Naive thymus-derived CD4-positive, alpha-beta T cell (primary cell): ENCODE measurements at regions of chr19 and their contacts with region 1.

Region 1: GRCh38 chr19:34428549-34429285 is 536 bp downstream of the UBA2 start:
- DNase-seq: peak in 2 of 9 donors; percentile 20 to 34
- ATAC-seq: peak; percentile 55
- H3K4me3 ChIP-seq: peak overlapping the region; percentile 95
- H3K4me3 Mint-ChIP-seq: peak overlapping the region; percentile 94 to 99 (median 98)
- H3K27ac ChIP-seq: peak overlapping the region; percentile 96
- H3K27ac Mint-ChIP-seq: peak overlapping the region; percentile 84 to 97 (median 94)
- H3K4me1 ChIP-seq: peaks cover 12 to 13% of the 10 kb centered on the region in 2 donors
- H3K4me1 Mint-ChIP-seq: peaks cover 24 to 52% (median 43%) of the 10 kb centered on the region in 7 donors
- H3K27me3 ChIP-seq: no peaks in the 10 kb centered on the region
- H3K27me3 Mint-ChIP-seq: no peaks in the 10 kb centered on the region

Region 2: GRCh38 chr19:34171877-34172660 is 256.6 kb before region 1 on chr19 and contains the start of gene LSM14A:
- CTCF ChIA-PET with region 1: no interaction called
- POLR2A ChIA-PET with region 1: interaction called, 7 read pairs
- intact Hi-C with region 1: loop called (anchors 2 kb)
- DNase-seq: peak; percentile 90 to 97 (median 95)
- ATAC-seq: peak; percentile 94
- H3K4me3 ChIP-seq: peak within 1 kb of the TSS; percentile 94
- H3K4me3 Mint-ChIP-seq: peak within 1 kb of the TSS; percentile 91 to 100 (median 96)
- H3K27ac ChIP-seq: peak within 1 kb of the TSS; percentile 95
- H3K27ac Mint-ChIP-seq: peak within 1 kb of the TSS; percentile 96 to 99 (median 99)
- H3K4me1 ChIP-seq: peaks cover 27 to 29% of the 10 kb centered on the region in 2 donors
- H3K4me1 Mint-ChIP-seq: peaks cover 29 to 51% (median 44%) of the 10 kb centered on the region in 7 donors
- H3K27me3 ChIP-seq: no peaks in the 10 kb centered on the region
- H3K27me3 Mint-ChIP-seq: no peaks in the 10 kb centered on the region
- total RNA-seq, gene LSM14A: 124 to 189 (median 166) TPM

Region 3: GRCh38 chr19:34269968-34270621 is 158.6 kb before region 1 on chr19:
- CTCF ChIA-PET with region 1: interaction called, 3 read pairs
- POLR2A ChIA-PET with region 1: no interaction called
- intact Hi-C with region 1: loop called in 1 of 2 experiments (anchors 5 kb)
- DNase-seq: peak; percentile 33 to 93 (median 91)
- ATAC-seq: peak; percentile 95
- H3K4me3 ChIP-seq: peak overlapping the region; percentile 28
- H3K4me3 Mint-ChIP-seq: peak overlapping the region; percentile 47 to 87 (median 76)
- H3K27ac ChIP-seq: peak overlapping the region; percentile 84
- H3K27ac Mint-ChIP-seq: peak overlapping the region; percentile 81 to 99 (median 98)
- H3K4me1 ChIP-seq: peaks cover 37 to 72% of the 10 kb centered on the region in 2 donors
- H3K4me1 Mint-ChIP-seq: peaks cover 32 to 90% (median 84%) of the 10 kb centered on the region in 7 donors
- H3K27me3 ChIP-seq: no peaks in the 10 kb centered on the region
- H3K27me3 Mint-ChIP-seq: no peaks in the 10 kb centered on the region

Region 4: DNA sequence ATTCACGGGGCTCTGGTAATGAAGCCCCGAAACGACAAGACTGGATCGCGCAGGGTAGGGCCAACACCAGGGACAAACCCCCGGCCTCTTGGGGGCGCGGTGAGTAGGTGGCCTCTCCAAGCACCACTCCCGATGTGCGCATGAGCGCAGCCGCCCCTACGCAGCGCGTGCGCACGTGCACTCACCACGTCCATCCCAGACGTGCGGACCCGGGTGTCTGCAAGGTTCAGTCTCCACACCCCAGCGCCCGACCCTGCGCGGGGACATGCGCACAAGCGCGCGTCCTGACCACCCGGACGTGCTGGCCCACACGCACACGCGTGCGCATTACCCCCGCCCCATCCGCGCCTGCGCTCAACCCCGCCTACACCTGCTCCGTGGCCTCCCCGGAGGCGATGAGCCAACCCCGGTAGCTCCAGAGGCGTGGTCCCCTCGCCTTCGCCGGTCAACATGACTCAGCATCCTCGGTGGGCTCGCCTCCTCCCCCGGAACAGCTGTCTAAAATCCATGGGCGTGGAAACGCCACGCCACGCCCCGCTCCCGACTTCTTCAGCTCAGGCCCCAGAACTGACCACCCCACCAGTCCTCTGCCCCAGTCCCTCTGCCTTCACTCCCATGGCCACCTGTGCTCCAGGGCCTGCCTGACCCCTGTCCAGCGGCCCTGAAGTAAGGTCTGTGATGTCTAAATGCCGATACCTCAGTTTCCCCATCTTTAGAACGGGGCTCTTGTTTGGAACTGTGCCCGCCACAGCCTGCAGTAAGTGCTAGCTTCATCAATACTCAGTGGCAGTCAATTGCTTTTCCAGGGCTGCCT is 69.4 kb before region 1 on chr19:
- CTCF ChIA-PET with region 1: no interaction called
- POLR2A ChIA-PET with region 1: interaction called, 10 read pairs
- intact Hi-C with region 1: loop called (anchors 1 to 2 kb)
- DNase-seq: peak; percentile 77 to 99 (median 89)
- ATAC-seq: peak; percentile 95
- H3K4me3 ChIP-seq: peak overlapping the region; percentile 55
- H3K4me3 Mint-ChIP-seq: peak overlapping the region; percentile 80 to 93 (median 90)
- H3K27ac ChIP-seq: peak overlapping the region; percentile 66
- H3K27ac Mint-ChIP-seq: peak overlapping the region; percentile 87 to 95 (median 94)
- H3K4me1 ChIP-seq: peaks cover 11 to 15% of the 10 kb centered on the region in 2 donors
- H3K4me1 Mint-ChIP-seq: peaks cover 18 to 62% (median 27%) of the 10 kb centered on the region in 7 donors
- H3K27me3 ChIP-seq: no peaks in the 10 kb centered on the region
- H3K27me3 Mint-ChIP-seq: no peaks in the 10 kb centered on the region

Region 5: DNA sequence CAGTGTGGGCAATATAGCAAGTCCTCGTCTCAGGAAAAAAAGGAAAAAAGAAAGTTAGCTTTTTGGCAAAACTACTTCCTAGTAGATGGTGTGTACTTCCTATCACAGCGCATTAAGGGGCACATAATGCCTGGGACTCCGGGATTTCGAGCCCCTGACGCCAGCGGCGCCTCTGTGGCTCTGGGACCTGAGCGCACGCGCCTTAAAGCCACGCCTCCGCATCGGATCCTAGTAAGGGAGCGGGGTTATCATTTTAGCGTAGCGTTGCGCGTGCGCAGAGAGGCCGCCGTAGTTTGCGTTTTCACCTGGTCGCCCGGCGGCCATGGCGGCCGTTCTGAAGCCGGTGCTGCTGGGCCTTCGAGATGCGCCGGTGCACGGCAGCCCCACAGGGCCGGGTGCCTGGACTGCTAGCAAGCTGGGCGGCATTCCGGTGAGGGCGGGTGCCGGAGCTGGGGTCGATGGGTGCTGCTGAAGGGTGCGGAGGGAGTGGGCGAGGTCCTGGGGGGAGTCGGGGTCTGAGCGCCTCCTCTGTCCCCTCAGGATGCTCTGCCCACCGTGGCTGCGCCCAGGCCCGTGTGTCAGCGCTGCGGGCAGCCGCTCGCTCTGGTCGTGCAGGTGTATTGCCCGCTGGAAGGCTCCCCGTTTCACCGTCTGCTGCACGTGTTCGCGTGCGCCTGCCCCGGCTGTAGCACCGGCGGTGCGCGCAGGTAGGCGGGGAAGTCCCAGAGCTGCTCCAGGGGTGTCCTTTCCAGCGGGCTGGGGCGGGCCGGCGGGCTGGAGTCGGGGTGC is 24.4 kb before region 1 on chr19 and contains the start of gene PDCD2L:
- CTCF ChIA-PET with region 1: no interaction called
- POLR2A ChIA-PET with region 1: interaction called, 4 read pairs
- intact Hi-C with region 1: loop called (anchors 1 kb)
- DNase-seq: peak; percentile 83 to 91 (median 89)
- ATAC-seq: peak; percentile 97
- H3K4me3 ChIP-seq: peak within 1 kb of the TSS; percentile 97
- H3K4me3 Mint-ChIP-seq: peak within 1 kb of the TSS; percentile 83 to 96 (median 92)
- H3K27ac ChIP-seq: peak within 1 kb of the TSS; percentile 81
- H3K27ac Mint-ChIP-seq: peak within 1 kb of the TSS; percentile 46 to 92 (median 88)
- H3K4me1 ChIP-seq: peaks cover 0 to 4% of the 10 kb centered on the region in 2 donors
- H3K4me1 Mint-ChIP-seq: peaks cover 9 to 42% (median 20%) of the 10 kb centered on the region in 7 donors
- H3K27me3 ChIP-seq: no peaks in the 10 kb centered on the region
- H3K27me3 Mint-ChIP-seq: no peaks in the 10 kb centered on the region
- total RNA-seq, gene PDCD2L: 4.9 to 14.5 (median 12.1) TPM

Region 6: GRCh38 chr19:34556488-34556887 is 127.8 kb after region 1 on chr19:
- CTCF ChIA-PET with region 1: no interaction called
- POLR2A ChIA-PET with region 1: no interaction called
- intact Hi-C with region 1: no loop called
- DNase-seq: no peak
- ATAC-seq: no peak
- H3K4me3 ChIP-seq: no peak overlapping the region
- H3K4me3 Mint-ChIP-seq: no peak overlapping the region
- H3K27ac ChIP-seq: no peak overlapping the region
- H3K27ac Mint-ChIP-seq: no peak overlapping the region
- H3K4me1 ChIP-seq: no peaks in the 10 kb centered on the region
- H3K4me1 Mint-ChIP-seq: no peaks in the 10 kb centered on the region
- H3K27me3 ChIP-seq: peaks cover 0 to 6% of the 10 kb centered on the region in 2 donors
- H3K27me3 Mint-ChIP-seq: peaks cover 0 to 57% (median 47%) of the 10 kb centered on the region in 5 donors

Region 7: DNA sequence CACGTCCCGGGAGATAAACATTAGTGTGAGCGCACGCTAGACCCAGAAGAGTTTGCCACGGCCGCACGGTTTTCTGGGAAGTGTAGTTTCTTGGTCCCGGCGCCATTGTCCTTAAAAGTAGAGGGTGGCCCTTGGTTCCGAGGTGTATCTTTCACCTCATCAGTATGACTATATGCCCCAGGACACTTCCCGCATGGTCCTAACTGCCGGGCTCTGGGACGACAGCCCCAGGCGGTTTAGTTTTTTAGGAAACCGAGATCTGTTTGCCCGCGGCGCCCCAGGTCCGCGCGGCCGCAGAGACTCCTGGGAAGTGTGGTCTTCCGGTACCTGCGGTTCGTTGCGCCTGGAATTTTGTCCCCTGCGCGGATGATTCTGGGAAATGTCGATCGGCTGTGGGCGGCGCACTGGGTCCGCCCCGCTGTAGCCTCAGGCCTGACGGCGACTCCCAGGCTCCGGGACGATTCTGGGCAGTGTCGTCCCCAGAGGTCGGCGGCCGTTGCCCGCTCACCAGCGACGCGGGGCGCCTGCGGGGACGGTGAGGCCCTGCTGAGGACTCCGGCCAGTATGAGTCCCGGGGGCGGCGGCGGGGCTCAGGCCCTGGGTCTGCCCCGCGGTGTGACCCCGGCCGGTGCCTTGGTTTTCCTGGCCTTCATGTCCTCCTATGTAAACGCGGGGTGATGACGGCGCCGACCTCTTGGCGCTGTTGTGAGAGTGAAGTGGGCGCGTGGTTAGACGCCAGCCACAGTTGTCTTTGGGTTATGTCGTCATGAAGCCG is 305.3 kb after region 1 on chr19 and contains the start of gene ZNF181:
- CTCF ChIA-PET with region 1: no interaction called
- POLR2A ChIA-PET with region 1: no interaction called
- intact Hi-C with region 1: loop called in 1 of 2 experiments (anchors 10 kb)
- DNase-seq: peak; percentile 58 to 84 (median 82)
- ATAC-seq: peak; percentile 89
- H3K4me3 ChIP-seq: peak within 1 kb of the TSS; percentile 79
- H3K4me3 Mint-ChIP-seq: peak within 1 kb of the TSS; percentile 86 to 99 (median 98)
- H3K27ac ChIP-seq: peak within 1 kb of the TSS; percentile 94
- H3K27ac Mint-ChIP-seq: peak within 1 kb of the TSS; percentile 90 to 99 (median 98)
- H3K4me1 ChIP-seq: peaks cover 11 to 17% of the 10 kb centered on the region in 2 donors
- H3K4me1 Mint-ChIP-seq: peaks cover 18 to 39% (median 28%) of the 10 kb centered on the region in 7 donors
- H3K27me3 ChIP-seq: no peaks in the 10 kb centered on the region
- H3K27me3 Mint-ChIP-seq: peaks cover 0 to 4% (median 0%) of the 10 kb centered on the region in 5 donors
- total RNA-seq, gene ZNF181: 4.8 to 28.5 (median 8.4) TPM